ENCODE measurements at regions of chr9 and their contacts with region 1.

Region 1: GRCh38 chr9:97046223-97046622 is 7.3 kb upstream of the CTSV start:
- DNase-seq: peak; percentile 98 to 99
- H3K4me3 ChIP-seq: peak overlapping the region; percentile 1; the same call in 1 of the 2 replicates
- H3K27ac ChIP-seq: peak overlapping the region; percentile 83
- H3K4me1 ChIP-seq: peaks cover 43% of the 10 kb centered on the region
- H3K27me3 ChIP-seq: no peaks in the 10 kb centered on the region
- CTCF ChIP-seq: no peak

Region 2: DNA sequence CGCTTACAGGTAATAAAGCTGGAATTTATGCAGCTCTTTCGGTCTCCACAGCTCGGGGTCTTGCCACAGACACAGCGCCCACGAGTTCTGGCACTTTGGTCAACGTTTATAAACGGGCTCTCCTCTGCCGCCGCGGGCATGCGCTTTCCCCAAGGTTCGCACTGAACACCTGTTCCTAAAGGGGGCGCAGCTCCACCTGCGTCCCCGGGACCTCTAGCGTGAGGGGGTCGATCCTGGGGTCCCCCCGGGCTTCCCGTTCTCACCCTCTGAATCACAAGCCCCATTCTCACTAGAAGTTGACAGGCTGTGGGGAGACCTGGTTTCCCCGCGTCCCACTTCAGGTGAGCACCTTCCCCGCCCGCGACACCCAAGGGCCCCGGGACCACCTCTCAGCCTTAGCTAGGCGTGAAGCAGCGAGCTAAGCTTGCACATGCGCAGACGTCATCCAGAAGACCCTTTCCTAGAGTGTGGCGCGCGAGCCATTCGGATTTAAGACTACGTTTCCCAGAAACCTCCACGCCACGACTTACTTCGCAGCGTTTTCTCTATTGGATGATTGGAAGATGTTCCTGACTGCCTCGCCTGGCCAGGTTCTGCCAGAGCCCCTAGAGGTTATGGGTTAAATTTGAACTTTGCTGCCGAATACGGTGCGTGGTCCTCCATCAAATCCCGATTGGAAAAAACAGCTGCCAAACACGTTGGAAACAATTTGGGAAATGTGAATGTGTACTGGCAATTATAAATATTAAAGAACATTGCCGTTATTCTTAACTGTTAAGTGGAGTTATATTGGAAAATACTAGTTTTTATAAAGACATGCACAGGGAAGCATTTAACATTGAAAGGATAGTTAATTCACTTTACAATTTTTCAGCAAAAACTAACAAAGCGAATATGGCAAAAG is 170.5 kb before region 1 on chr9:
- CTCF ChIA-PET with region 1: no interaction called
- POLR2A ChIA-PET with region 1: no interaction called
- intact Hi-C with region 1: loop called (anchors 5 kb)
- DNase-seq: peak; percentile 68 to 77
- H3K4me3 ChIP-seq: peak overlapping the region; percentile 91
- H3K27ac ChIP-seq: peak overlapping the region; percentile 83
- H3K4me1 ChIP-seq: peaks cover 17% of the 10 kb centered on the region
- H3K27me3 ChIP-seq: no peaks in the 10 kb centered on the region
- CTCF ChIP-seq: peak; percentile 52; the same call in 1 of the 2 replicates

Region 3: DNA sequence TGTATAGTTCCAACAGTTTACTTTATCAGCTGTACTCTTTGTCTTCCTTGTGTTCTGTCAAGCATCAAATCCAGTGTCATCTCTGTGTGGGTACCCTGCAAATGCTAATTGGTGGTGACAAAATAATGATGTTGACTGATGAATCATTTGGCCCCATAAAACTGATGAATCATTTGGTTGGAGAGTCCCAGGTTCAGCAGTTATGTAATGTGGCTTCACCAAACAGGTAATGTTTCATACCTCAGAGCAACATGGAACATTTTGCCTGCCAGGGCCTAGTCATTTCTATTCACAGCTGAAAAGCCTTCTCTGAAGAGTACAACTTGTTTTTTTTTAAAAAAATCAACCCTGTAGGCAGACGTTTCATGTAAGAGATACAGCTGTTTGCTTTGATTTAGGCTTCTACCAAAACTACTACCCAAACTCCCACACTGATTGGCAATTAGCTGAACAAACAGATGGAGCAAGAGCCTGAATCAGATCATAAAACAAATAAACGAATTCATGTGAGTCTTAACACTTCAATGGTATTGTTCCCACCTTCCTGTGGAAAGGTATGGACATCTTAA is 16.3 kb after region 1 on chr9:
- CTCF ChIA-PET with region 1: interaction called, 7 read pairs
- POLR2A ChIA-PET with region 1: interaction called, 33 read pairs
- intact Hi-C with region 1: loop called (anchors 1 kb)
- DNase-seq: peak; percentile 66 to 98
- H3K4me3 ChIP-seq: no peak overlapping the region
- H3K27ac ChIP-seq: peak overlapping the region; percentile 79
- H3K4me1 ChIP-seq: peaks cover 40% of the 10 kb centered on the region
- H3K27me3 ChIP-seq: no peaks in the 10 kb centered on the region
- CTCF ChIP-seq: no peak

Region 4: GRCh38 chr9:97966493-97966892 is 920.3 kb after region 1 on chr9:
- CTCF ChIA-PET with region 1: no interaction called
- POLR2A ChIA-PET with region 1: no interaction called
- intact Hi-C with region 1: no loop called
- DNase-seq: no peak
- H3K4me3 ChIP-seq: no peak overlapping the region
- H3K27ac ChIP-seq: no peak overlapping the region
- H3K4me1 ChIP-seq: no peaks in the 10 kb centered on the region
- H3K27me3 ChIP-seq: no peaks in the 10 kb centered on the region
- CTCF ChIP-seq: no peak

Measured in PC-9 (cell line).